Aorta (tissue), 5 donors: ENCODE measurements at regions of chr9 and their contacts with region 1.

Region 1: GRCh38 chr9:27468462-27469110 is 55.5 kb upstream of the IFNK start:
- DNase-seq: no peak
- ATAC-seq: no peak
- H3K4me3 ChIP-seq: no peak overlapping the region
- H3K27ac ChIP-seq: no peak overlapping the region
- H3K4me1 ChIP-seq: peaks cover 0 to 3% of the 10 kb centered on the region in 2 donors
- H3K27me3 ChIP-seq: no peaks in the 10 kb centered on the region

Region 2: GRCh38 chr9:27430750-27431535 is 37.6 kb before region 1 on chr9:
- intact Hi-C with region 1: loop called in 1 of 2 experiments (anchors 5 kb)
- DNase-seq: no peak
- ATAC-seq: no peak
- H3K4me3 ChIP-seq: no peak overlapping the region
- H3K27ac ChIP-seq: no peak overlapping the region
- H3K4me1 ChIP-seq: peaks cover 6% of the 10 kb centered on the region in 2 donors
- H3K27me3 ChIP-seq: no peaks in the 10 kb centered on the region